PC-9 (cell line): ENCODE measurements at regions of chr1 and their contacts with region 1.

Region 1: DNA sequence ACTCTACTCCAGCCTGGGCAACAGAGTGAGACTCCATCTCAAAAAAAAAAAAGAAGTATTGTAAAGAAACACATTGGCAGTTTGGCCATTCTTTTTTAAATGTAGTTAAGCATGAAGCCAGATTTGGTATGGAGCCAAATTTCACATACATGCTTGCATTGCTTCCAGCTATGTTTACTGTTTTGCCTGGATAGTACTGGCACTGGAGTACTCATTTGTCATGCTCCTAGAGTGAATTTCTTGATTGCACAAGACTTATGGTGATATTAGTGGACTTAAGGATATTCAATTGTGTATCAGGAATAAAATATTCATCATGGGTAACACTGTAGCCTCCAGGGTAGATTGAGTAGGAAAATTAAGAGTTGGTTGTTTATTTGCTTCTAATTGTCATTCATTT is 24.5 kb upstream of the SLC9A1 start:
- DNase-seq: no peak
- H3K4me3 ChIP-seq: no peak overlapping the region
- H3K27ac ChIP-seq: no peak overlapping the region
- H3K4me1 ChIP-seq: no peaks in the 10 kb centered on the region
- H3K27me3 ChIP-seq: no peaks in the 10 kb centered on the region
- CTCF ChIP-seq: no peak

Region 2: DNA sequence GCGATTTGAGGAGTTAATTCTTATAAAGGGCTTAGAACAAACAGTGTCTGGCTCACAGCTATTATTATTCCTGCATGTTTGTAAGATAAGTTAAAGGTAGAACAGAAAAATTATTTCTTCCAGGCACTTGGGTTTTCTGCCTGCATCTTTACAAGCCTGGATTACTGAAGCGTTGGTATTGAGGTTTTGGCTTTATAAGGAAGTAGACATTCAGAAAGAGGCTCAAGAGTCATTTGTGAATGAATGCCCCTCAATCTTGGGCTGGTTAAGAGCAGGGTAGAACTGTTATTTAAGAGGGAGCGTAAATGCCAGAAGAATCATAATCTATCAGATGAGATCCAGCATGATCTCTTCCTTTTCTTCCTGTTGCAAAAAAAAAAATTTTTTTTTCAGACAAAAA is 560.8 kb before region 1 on chr1:
- CTCF ChIA-PET with region 1: no interaction called
- POLR2A ChIA-PET with region 1: no interaction called
- intact Hi-C with region 1: no loop called
- DNase-seq: no peak
- H3K4me3 ChIP-seq: no peak overlapping the region
- H3K27ac ChIP-seq: 0 out of 2 replicates have a peak overlapping the region, but pooled peaks have one; percentile 23
- H3K4me1 ChIP-seq: peaks cover 15% of the 10 kb centered on the region
- H3K27me3 ChIP-seq: no peaks in the 10 kb centered on the region
- CTCF ChIP-seq: no peak

Region 3: GRCh38 chr1:27154991-27155781 is 24.2 kb before region 1 on chr1 and contains the start of gene SLC9A1:
- CTCF ChIA-PET with region 1: no interaction called
- POLR2A ChIA-PET with region 1: no interaction called
- intact Hi-C with region 1: no loop called
- DNase-seq: peak; percentile 91 to 92
- H3K4me3 ChIP-seq: peak within 1 kb of the TSS; percentile 76
- H3K27ac ChIP-seq: peak within 1 kb of the TSS; percentile 80
- H3K4me1 ChIP-seq: peaks cover 34% of the 10 kb centered on the region
- H3K27me3 ChIP-seq: no peaks in the 10 kb centered on the region
- CTCF ChIP-seq: peak; percentile 64
- total RNA-seq, gene SLC9A1: 17.9 and 27.5 TPM in 2 replicates

Region 4: GRCh38 chr1:27166351-27166802 is 13.0 kb before region 1 on chr1:
- CTCF ChIA-PET with region 1: no interaction called
- POLR2A ChIA-PET with region 1: no interaction called
- intact Hi-C with region 1: no loop called
- DNase-seq: peak in 1 of 2 experiments; percentile 78
- H3K4me3 ChIP-seq: no peak overlapping the region
- H3K27ac ChIP-seq: peak overlapping the region; percentile 40
- H3K4me1 ChIP-seq: peaks cover 22% of the 10 kb centered on the region
- H3K27me3 ChIP-seq: no peaks in the 10 kb centered on the region
- CTCF ChIP-seq: no peak

Region 5: DNA sequence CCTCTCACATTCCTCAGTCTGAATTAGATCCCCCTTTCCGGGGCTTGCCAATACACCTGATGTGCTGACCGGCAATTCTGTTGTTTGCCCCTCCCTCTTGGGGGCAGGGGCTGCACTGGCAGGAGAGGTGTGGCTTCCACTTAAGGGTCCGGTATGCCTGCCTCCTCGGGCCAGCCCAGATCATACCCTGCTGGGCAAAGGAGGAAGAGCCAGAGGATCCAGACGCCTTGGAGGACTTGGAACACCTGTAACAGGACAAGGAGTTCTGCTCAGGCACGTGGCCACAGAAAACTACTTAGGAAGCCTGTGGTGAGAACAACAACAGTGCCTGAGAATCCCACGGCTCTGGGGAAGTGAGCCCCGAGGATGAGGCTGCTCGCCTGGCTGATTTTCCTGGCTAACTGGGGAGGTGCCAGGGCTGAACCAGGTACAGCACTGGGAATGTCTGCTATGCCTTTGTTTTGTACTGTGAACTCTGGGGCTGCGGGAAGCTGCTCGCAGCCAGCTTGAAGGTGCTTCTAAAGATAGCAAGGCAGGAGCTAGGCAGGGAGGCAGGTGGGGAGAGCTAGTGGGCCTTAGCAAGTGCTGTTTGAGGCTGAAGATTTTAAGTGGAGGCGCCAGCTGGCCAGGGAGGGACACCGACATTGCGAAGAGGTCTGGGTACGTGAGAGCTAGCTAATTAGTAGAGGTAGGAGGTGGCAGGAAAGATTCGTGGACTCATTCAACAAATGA is 755.6 kb after region 1 on chr1 and contains the start of gene SMPDL3B:
- CTCF ChIA-PET with region 1: interaction called, 26 read pairs
- POLR2A ChIA-PET with region 1: no interaction called
- intact Hi-C with region 1: no loop called
- DNase-seq: peak; percentile 73 to 81
- H3K4me3 ChIP-seq: peak within 1 kb of the TSS; percentile 58
- H3K27ac ChIP-seq: peak within 1 kb of the TSS; percentile 14; the same call in 1 of the 2 replicates
- H3K4me1 ChIP-seq: peaks cover 11% of the 10 kb centered on the region
- H3K27me3 ChIP-seq: no peaks in the 10 kb centered on the region
- CTCF ChIP-seq: peak; percentile 31; the same call in 1 of the 2 replicates
- total RNA-seq, gene SMPDL3B: 26.5 and 29.2 TPM in 2 replicates